Endothelial cell of umbilical vein (primary cell): ENCODE measurements at regions of chr14 and their contacts with region 1.

Region 1: DNA sequence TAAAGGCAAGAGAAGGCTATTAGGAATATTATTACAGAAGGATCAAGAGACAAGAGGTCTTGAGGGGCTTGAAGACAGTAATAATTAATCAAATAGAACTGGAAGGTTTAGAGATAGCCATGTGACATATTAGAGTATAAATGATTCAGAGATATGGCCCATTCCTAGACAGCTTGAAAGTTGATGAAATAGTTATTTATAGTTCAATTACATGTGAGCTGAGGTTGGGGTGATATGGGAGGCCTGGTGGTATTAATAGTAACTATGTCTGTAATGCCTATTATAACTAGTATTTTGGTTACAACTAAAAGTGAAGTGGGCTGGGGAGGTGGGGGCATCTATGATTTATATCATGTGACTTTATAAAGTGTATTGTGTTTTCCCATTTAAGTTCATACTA is 14.1 kb upstream of the MIS18BP1 start:
- DNase-seq: no peak
- H3K4me3 ChIP-seq: no peak overlapping the region
- H3K27ac ChIP-seq: no peak overlapping the region
- H3K4me1 ChIP-seq: no peaks in the 10 kb centered on the region
- H3K27me3 ChIP-seq: peaks cover 3 to 6% of the 10 kb centered on the region in 2 experiments
- CTCF ChIP-seq: no peak
- POLR2A ChIP-seq: no peak

Region 2: GRCh38 chr14:44352201-44352600 is 914.9 kb before region 1 on chr14:
- CTCF ChIA-PET with region 1: no interaction called
- POLR2A ChIA-PET with region 1: no interaction called
- dilution Hi-C with region 1: no loop called
- intact Hi-C with region 1: no loop called
- DNase-seq: no peak
- H3K4me3 ChIP-seq: no peak overlapping the region
- H3K27ac ChIP-seq: no peak overlapping the region
- H3K4me1 ChIP-seq: no peaks in the 10 kb centered on the region
- H3K27me3 ChIP-seq: no peaks in the 10 kb centered on the region
- CTCF ChIP-seq: no peak
- POLR2A ChIP-seq: no peak

Region 3: DNA sequence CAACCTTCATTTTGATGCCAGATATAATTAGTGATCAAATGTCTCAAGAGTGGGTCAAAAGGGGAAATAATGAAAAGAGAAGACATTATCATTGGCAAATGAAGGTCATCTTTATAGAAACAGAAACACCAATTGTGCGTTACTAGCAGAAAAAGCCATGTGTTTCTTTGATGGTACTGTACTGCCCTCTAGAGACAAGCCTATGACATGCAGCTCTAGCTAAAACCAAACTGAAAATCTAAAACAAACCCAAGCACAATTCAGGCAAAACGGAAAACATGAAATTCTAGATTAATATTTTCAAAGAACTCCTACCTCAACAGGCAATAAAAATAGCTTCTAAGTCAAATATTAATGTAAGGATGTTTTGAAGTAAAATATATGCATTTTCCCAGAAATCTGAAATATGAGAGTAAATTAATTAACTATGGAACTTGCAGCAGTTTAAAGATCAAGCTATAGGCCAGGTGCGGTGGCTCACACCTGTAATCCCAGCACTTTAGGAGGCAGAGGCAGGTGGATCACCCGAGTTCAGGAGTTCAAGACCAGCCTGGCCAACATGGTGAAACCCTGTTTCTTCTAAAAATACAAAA is 420.7 kb before region 1 on chr14:
- CTCF ChIA-PET with region 1: interaction called, 16 read pairs
- POLR2A ChIA-PET with region 1: no interaction called
- dilution Hi-C with region 1: no loop called
- intact Hi-C with region 1: loop called (anchors 1 kb)
- DNase-seq: peak; percentile 38
- H3K4me3 ChIP-seq: no peak overlapping the region
- H3K27ac ChIP-seq: no peak overlapping the region
- H3K4me1 ChIP-seq: no peaks in the 10 kb centered on the region
- H3K27me3 ChIP-seq: no peaks in the 10 kb centered on the region
- CTCF ChIP-seq: peak; percentile 53 to 75
- POLR2A ChIP-seq: no peak

Region 4: GRCh38 chr14:45519766-45520165 is 252.7 kb after region 1 on chr14:
- CTCF ChIA-PET with region 1: no interaction called
- POLR2A ChIA-PET with region 1: no interaction called
- dilution Hi-C with region 1: no loop called
- intact Hi-C with region 1: no loop called
- DNase-seq: no peak
- H3K4me3 ChIP-seq: no peak overlapping the region
- H3K27ac ChIP-seq: no peak overlapping the region
- H3K4me1 ChIP-seq: no peaks in the 10 kb centered on the region
- H3K27me3 ChIP-seq: no peaks in the 10 kb centered on the region
- CTCF ChIP-seq: no peak
- POLR2A ChIP-seq: no peak